ENCODE measurements at regions of chr1 and their contacts with region 1.

Region 1: GRCh38 chr1:202112839-202113672 is 9.7 kb upstream of the GPR37L1 start:
- DNase-seq: no peak
- H3K4me3 ChIP-seq: no peak overlapping the region
- H3K27ac ChIP-seq: no peak overlapping the region
- H3K4me1 ChIP-seq: peaks cover 14% of the 10 kb centered on the region
- CTCF ChIP-seq: no peak

Region 2: GRCh38 chr1:201895913-201896807 is 216.9 kb before region 1 on chr1:
- CTCF ChIA-PET with region 1: no interaction called
- POLR2A ChIA-PET with region 1: no interaction called
- intact Hi-C with region 1: loop called (anchors 10 kb)
- DNase-seq: peak; percentile 85
- H3K4me3 ChIP-seq: no peak overlapping the region
- H3K27ac ChIP-seq: no peak overlapping the region
- H3K4me1 ChIP-seq: no peaks in the 10 kb centered on the region
- CTCF ChIP-seq: peak; percentile 99

Measured in OCI-LY7 (cell line).